ENCODE measurements at regions of chr5 and their contacts with region 1.

Region 1: DNA sequence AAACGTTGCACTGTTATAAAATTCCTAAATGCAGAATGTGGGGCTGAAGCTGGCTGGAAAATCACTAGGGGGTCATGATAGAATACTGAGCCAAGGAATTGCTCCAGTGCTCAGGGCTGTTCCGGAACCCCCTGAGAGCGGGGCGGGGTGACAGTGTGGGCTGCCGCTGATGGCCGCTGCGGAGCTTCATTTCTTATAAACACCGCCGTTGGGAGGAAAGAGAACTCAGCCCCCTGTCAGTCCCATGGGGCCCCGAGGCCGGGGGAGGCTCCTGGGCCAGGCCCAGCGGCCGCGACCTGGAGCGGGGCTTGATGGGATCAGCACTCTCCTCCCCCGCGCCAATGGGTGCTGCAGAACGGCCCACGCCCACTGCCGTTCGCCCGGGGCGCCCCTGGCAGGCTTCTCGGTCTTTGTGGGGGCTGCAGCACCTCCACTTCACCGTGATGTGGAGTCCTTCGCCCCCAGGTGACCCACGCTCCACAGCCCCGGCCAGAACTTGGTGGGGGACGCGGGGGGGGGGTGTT is 5.2 kb upstream of the IRF1 start:
- DNase-seq: peak in 1 of 2 experiments; percentile 77
- H3K4me3 ChIP-seq: peak overlapping the region; percentile 51 to 88 (median 84)
- H3K27ac ChIP-seq: no peak overlapping the region
- H3K4me1 ChIP-seq: peaks cover 7 to 21% (median 12%) of the 10 kb centered on the region in 4 experiments
- H3K27me3 ChIP-seq: peaks cover 0 to 7% (median 0%) of the 10 kb centered on the region in 4 experiments; a peak in 3 of 7 replicates
- CTCF ChIP-seq: no peak
- EP300 ChIP-seq: no peak
- POLR2A ChIP-seq: peak in 1 of 2 experiments; percentile 18; a peak in 2 of 3 replicates
- RAD21 ChIP-seq: 0 out of 4 replicates have a peak, but pooled peaks of 1 of the 2 experiments have one; percentile 2

Region 2: GRCh38 chr5:132410451-132411381 is 85.0 kb before region 1 on chr5:
- CTCF ChIA-PET with region 1: interaction called, 98 read pairs
- POLR2A ChIA-PET with region 1: interaction called, 11 read pairs
- DNase-seq: peak in 1 of 2 experiments; percentile 91
- H3K4me3 ChIP-seq: peak overlapping the region; percentile 36 to 79 (median 58)
- H3K27ac ChIP-seq: peak overlapping the region; percentile 40; the same call in 1 of the 2 replicates
- H3K4me1 ChIP-seq: peaks cover 0 to 4% (median under 1%) of the 10 kb centered on the region in 4 experiments; a peak in 3 of 7 replicates
- H3K27me3 ChIP-seq: 0 out of 7 replicates have a peak, but pooled peaks cover 0 to 3% (median 0%) of the 10 kb centered on the region in 4 experiments
- CTCF ChIP-seq: peak; percentile 68 to 88 (median 82)
- EP300 ChIP-seq: no peak
- POLR2A ChIP-seq: peak in 1 of 2 experiments; percentile 55; a peak in 2 of 3 replicates
- RAD21 ChIP-seq: peak; percentile 61 to 78

Region 3: DNA sequence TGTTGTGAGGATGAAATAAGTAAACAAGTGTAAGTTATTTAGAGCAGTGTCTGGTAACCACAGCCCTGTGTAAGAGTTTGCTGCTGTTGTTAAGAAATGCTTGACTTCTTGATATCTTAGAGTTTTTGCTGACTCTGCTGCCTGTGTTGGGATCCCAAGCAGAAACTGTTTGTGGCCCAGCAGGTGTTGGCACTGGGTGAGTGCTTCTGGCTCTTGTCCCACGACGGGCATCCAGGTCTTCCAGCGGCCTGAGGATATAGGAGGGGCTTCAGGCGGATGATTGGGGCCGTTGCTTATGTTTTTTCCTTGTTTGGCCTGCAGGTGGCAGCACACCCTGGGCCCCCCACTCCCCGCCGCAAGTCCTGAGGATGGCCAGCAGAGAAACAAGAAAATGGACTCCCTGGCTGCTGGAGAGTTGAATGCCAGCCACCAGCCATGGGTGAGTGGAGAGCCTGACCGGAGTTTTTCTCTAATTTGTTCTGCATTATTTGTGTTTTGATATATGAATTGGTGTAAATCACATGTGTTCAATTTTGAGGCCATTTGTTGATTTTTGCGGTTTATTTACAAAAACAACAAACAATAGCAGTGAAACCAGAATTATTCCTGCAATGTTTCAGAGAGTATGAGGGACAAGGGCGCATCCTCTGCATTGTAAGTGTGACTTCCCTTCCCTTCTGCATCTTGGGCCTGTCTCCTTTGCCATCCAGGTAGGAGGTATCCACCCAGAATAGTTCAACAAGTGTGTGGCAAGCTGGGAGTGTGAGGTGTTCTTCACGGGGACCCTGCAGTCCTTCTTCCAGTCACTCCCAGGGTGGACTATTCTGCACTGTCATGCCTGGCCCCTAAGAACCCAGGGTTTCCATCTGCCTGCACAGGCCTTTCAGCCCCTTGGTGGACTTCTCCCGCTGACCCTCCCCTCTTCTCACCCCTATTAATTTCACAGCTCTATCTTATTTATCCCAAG is 75.9 kb before region 1 on chr5:
- CTCF ChIA-PET with region 1: interaction called, 201 read pairs
- POLR2A ChIA-PET with region 1: interaction called, 49 read pairs
- DNase-seq: peak in 1 of 2 experiments; percentile 84
- H3K4me3 ChIP-seq: no peak overlapping the region
- H3K27ac ChIP-seq: no peak overlapping the region
- H3K4me1 ChIP-seq: peaks cover 0 to 2% (median 1%) of the 10 kb centered on the region in 4 experiments; a peak in 2 of 7 replicates
- H3K27me3 ChIP-seq: no peaks in the 10 kb centered on the region
- CTCF ChIP-seq: peak; percentile 64 to 92 (median 83)
- EP300 ChIP-seq: 0 out of 3 replicates have a peak, but pooled peaks of 1 of the 2 experiments have one; percentile 15
- POLR2A ChIP-seq: no peak
- RAD21 ChIP-seq: peak; percentile 78 to 86

Region 4: DNA sequence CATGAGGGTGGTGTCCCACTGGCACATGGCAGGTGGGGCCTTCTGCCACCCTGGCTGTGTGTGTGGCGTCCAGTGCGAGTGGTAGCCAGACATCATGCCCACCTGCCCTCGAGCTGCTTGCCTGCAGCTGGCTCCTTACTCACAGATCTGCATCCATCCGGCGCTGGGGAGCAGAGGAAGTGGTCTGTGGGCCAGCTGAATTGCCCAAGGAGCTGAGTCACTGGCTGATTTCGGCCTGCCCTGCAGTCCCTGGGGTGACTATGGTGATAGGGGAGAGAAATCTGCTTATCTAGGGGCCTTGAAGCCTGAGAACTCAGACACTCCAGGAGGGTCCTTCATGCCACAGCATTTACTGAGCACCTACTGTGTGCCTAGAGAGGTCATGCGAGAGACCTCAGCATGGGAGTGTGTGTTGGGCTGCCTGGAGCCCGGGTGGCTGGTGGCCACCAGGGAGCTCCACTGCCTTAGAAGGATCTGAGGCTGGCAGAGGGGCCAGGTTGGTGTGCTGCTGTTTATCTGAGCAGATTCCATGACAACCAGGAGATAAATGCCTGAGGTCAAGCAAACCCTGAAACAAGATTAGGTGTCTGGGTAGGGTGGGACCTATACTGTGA is 69.1 kb before region 1 on chr5:
- CTCF ChIA-PET with region 1: interaction called, 201 read pairs
- POLR2A ChIA-PET with region 1: interaction called, 49 read pairs
- DNase-seq: peak in 1 of 2 experiments; percentile 51
- H3K4me3 ChIP-seq: no peak overlapping the region
- H3K27ac ChIP-seq: no peak overlapping the region; the same call in 1 of the 2 replicates
- H3K4me1 ChIP-seq: peaks cover 0 to 9% (median 5%) of the 10 kb centered on the region in 4 experiments; a peak in 5 of 7 replicates
- H3K27me3 ChIP-seq: no peaks in the 10 kb centered on the region; a peak in 1 of 7 replicates
- CTCF ChIP-seq: peak; percentile 51 to 66 (median 63)
- EP300 ChIP-seq: 0 out of 3 replicates have a peak, but pooled peaks of 1 of the 2 experiments have one; percentile 26
- POLR2A ChIP-seq: no peak
- RAD21 ChIP-seq: peak; percentile 60 to 79

Region 5: GRCh38 chr5:132473019-132473531 is 22.7 kb before region 1 on chr5:
- CTCF ChIA-PET with region 1: interaction called, 77 read pairs
- POLR2A ChIA-PET with region 1: interaction called, 42 read pairs
- DNase-seq: no peak
- H3K4me3 ChIP-seq: no peak overlapping the region
- H3K27ac ChIP-seq: no peak overlapping the region
- H3K4me1 ChIP-seq: peaks cover 0 to 10% (median 0%) of the 10 kb centered on the region in 4 experiments; a peak in 2 of 7 replicates
- H3K27me3 ChIP-seq: no peaks in the 10 kb centered on the region
- CTCF ChIP-seq: no peak
- EP300 ChIP-seq: no peak
- POLR2A ChIP-seq: no peak
- RAD21 ChIP-seq: no peak

Region 6: GRCh38 chr5:132484391-132484725 is 11.4 kb before region 1 on chr5:
- CTCF ChIA-PET with region 1: interaction called, 77 read pairs
- POLR2A ChIA-PET with region 1: interaction called, 42 read pairs
- DNase-seq: no peak
- H3K4me3 ChIP-seq: no peak overlapping the region
- H3K27ac ChIP-seq: no peak overlapping the region
- H3K4me1 ChIP-seq: peaks cover 0 to 3% (median under 1%) of the 10 kb centered on the region in 4 experiments; a peak in 2 of 7 replicates
- H3K27me3 ChIP-seq: peaks cover 0 to 1% (median under 1%) of the 10 kb centered on the region in 4 experiments; a peak in 1 of 7 replicates
- CTCF ChIP-seq: no peak
- EP300 ChIP-seq: no peak
- POLR2A ChIP-seq: no peak
- RAD21 ChIP-seq: no peak

Region 7: DNA sequence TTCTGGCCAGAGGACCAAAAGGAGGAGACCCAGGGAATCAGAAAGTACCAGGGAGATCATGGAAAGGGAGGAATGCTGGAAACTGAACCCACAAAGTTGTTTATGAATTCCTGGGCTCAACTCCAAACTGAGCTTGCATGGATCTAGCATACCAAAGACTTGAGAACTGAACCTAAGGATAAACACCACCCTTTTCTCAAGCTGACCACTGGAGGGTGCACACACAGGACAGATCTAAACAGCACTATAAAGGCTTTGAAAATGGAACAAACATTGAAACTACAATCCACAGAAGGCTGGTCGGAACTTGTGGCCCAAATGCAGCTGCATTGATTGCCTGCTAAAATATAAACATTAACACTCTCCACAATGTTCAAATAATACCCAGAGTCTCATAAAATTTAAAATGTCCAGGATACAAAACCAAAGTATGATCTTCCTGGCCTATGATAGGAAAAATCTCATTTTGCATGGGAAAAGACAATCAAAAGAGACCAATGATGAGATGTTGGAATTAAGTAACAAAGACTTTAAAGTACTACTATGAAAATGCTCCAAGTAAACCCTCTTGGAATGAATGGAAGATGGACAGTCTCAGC is 10.5 kb after region 1 on chr5:
- CTCF ChIA-PET with region 1: interaction called, 57 read pairs
- POLR2A ChIA-PET with region 1: interaction called, 13 read pairs
- DNase-seq: no peak
- H3K4me3 ChIP-seq: no peak overlapping the region
- H3K27ac ChIP-seq: no peak overlapping the region
- H3K4me1 ChIP-seq: peaks cover 0 to 2% (median 0%) of the 10 kb centered on the region in 4 experiments; a peak in 2 of 7 replicates
- H3K27me3 ChIP-seq: no peaks in the 10 kb centered on the region
- CTCF ChIP-seq: peak in 2 of 3 experiments; percentile 47 to 60; a peak in 3 of 4 replicates
- EP300 ChIP-seq: no peak
- POLR2A ChIP-seq: no peak
- RAD21 ChIP-seq: peak; percentile 28 to 54; a peak in 3 of 4 replicates

Measured in H1 (cell line).